CD4-positive, alpha-beta T cell (primary cell): ENCODE measurements at regions of chr1 and their contacts with region 1.

Region 1: GRCh38 chr1:93219443-93219842 is 38.9 kb downstream of the CCDC18 start:
- DNase-seq: peak in 3 of 14 experiments; percentile 26 to 41 (median 29)
- ATAC-seq: peak; percentile 64
- H3K4me3 ChIP-seq: peak overlapping the region; percentile 57
- H3K4me3 Mint-ChIP-seq: peak overlapping the region; percentile 82
- H3K27ac ChIP-seq: peak overlapping the region in 1 of 2 donors; percentile 46
- H3K27ac Mint-ChIP-seq: peak overlapping the region; percentile 61
- H3K4me1 ChIP-seq: no peaks in the 10 kb centered on the region
- H3K4me1 Mint-ChIP-seq: peaks cover 27% of the 10 kb centered on the region
- H3K27me3 ChIP-seq: no peaks in the 10 kb centered on the region
- H3K27me3 Mint-ChIP-seq: no peaks in the 10 kb centered on the region
- CTCF ChIP-seq: no peak

Region 2: GRCh38 chr1:93148001-93148400 is 71.4 kb before region 1 on chr1:
- CTCF ChIA-PET with region 1: no interaction called
- POLR2A ChIA-PET with region 1: no interaction called
- intact Hi-C with region 1: loop called in 1 of 2 experiments (anchors 10 kb)
- DNase-seq: no peak
- ATAC-seq: no peak
- H3K4me3 ChIP-seq: no peak overlapping the region
- H3K4me3 Mint-ChIP-seq: no peak overlapping the region
- H3K27ac ChIP-seq: no peak overlapping the region
- H3K27ac Mint-ChIP-seq: peak overlapping the region; percentile 4
- H3K4me1 ChIP-seq: no peaks in the 10 kb centered on the region
- H3K4me1 Mint-ChIP-seq: peaks cover 6% of the 10 kb centered on the region
- H3K27me3 ChIP-seq: no peaks in the 10 kb centered on the region
- H3K27me3 Mint-ChIP-seq: no peaks in the 10 kb centered on the region
- CTCF ChIP-seq: no peak

Region 3: DNA sequence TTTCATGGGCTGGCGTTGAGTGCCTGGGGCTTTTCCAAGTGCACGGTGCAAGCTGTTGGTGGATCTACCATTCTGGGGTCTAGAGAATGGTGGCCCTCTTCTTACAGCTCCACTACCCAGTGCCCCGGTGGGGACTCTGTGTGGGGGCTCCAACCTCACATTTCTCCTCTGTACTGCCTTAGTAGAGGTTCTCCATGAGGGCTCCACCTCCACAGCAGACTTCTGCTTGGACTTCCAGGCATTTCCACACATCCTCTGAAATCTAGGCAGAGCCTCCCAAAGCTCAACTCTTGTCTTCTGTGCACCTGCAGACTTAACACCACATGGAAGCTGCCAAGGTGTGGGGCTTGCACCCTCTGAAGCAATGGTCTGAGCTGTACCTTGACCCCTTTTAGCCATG is 43.2 kb after region 1 on chr1:
- CTCF ChIA-PET with region 1: no interaction called
- POLR2A ChIA-PET with region 1: no interaction called
- intact Hi-C with region 1: no loop called
- DNase-seq: no peak
- ATAC-seq: no peak
- H3K4me3 ChIP-seq: no peak overlapping the region
- H3K4me3 Mint-ChIP-seq: no peak overlapping the region
- H3K27ac ChIP-seq: no peak overlapping the region
- H3K27ac Mint-ChIP-seq: no peak overlapping the region
- H3K4me1 ChIP-seq: no peaks in the 10 kb centered on the region
- H3K4me1 Mint-ChIP-seq: no peaks in the 10 kb centered on the region
- H3K27me3 ChIP-seq: no peaks in the 10 kb centered on the region
- H3K27me3 Mint-ChIP-seq: no peaks in the 10 kb centered on the region
- CTCF ChIP-seq: no peak